ENCODE measurements at regions of chr17 and their contacts with region 1.

Region 1: DNA sequence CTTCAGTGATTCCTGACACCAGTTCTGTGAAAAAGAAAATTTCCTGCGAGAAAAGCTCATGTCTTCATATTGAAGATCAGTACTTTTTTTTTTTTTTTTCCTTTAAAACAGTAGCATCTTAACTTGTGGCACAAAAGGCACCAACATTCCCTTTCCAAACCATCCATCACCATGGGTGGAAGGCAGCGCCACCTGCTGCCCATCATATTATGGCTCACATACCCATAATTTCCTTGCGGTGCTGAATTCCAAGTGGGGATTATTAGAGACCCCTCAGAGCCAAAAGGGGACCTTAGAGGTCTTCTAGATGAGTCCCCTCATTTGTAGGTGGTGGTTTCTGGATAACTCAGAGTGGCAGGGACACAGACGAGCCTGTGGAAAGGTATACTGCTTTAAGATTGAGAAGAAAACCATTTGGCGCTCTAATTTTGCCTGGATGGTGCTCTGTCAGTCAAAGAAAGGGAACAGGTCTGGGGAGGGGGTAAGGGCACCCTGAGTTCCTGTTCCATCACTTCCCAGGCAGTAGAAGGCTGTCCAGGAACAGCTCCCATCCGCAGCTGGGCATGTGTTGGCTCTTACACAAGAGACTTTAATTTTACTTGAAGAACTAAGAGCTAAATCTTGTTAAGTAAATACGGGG is 7.9 kb upstream of the SOST start:
- DNase-seq: peak; percentile 71
- ATAC-seq: no peak
- H3K4me3 Mint-ChIP-seq: no peak overlapping the region
- H3K27ac Mint-ChIP-seq: no peak overlapping the region
- H3K4me1 Mint-ChIP-seq: no peaks in the 10 kb centered on the region
- H3K27me3 Mint-ChIP-seq: no peaks in the 10 kb centered on the region
- CTCF ChIP-seq: peak; percentile 89

Region 2: GRCh38 chr17:43576563-43577229 is 189.8 kb before region 1 on chr17:
- CTCF ChIA-PET with region 1: interaction called, 27 read pairs
- POLR2A ChIA-PET with region 1: no interaction called
- intact Hi-C with region 1: loop called (anchors 10 kb)
- DNase-seq: peak; percentile 73
- ATAC-seq: peak; percentile 77
- H3K4me3 Mint-ChIP-seq: no peak overlapping the region
- H3K27ac Mint-ChIP-seq: no peak overlapping the region
- H3K4me1 Mint-ChIP-seq: peaks cover 12% of the 10 kb centered on the region
- H3K27me3 Mint-ChIP-seq: peaks cover 2% of the 10 kb centered on the region
- CTCF ChIP-seq: peak; percentile 92

Region 3: DNA sequence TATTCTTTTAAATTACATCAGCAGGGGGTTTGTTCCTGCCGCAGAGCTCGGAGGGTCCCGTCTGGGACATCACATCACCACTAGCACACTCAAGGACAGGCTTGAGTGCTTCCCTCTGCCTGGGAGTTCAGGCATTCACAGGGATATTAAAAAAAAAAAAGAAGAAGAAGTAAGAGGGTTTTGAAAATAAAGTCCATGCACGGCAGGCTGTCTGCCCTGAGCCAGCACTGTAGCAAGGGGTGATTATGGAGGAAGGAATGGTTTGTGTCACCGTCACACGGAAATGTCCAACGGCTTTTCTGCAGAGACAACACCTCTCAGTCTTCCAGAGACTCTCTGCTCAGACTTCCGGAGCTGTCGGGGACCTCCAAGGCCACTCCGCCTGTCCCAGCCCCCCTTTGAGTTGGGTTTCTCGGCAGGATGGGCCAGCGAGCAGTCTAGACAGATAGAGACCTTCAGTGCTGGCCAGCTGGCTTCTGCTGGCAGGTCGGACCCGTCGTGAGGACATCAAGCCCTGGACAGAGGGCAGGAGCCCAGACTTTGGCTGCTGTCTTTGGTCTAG is 138.4 kb before region 1 on chr17:
- CTCF ChIA-PET with region 1: no interaction called
- POLR2A ChIA-PET with region 1: no interaction called
- intact Hi-C with region 1: no loop called
- DNase-seq: no peak
- ATAC-seq: no peak
- H3K4me3 Mint-ChIP-seq: no peak overlapping the region
- H3K27ac Mint-ChIP-seq: no peak overlapping the region
- H3K4me1 Mint-ChIP-seq: no peaks in the 10 kb centered on the region
- H3K27me3 Mint-ChIP-seq: peaks cover 4% of the 10 kb centered on the region
- CTCF ChIP-seq: no peak

Region 4: DNA sequence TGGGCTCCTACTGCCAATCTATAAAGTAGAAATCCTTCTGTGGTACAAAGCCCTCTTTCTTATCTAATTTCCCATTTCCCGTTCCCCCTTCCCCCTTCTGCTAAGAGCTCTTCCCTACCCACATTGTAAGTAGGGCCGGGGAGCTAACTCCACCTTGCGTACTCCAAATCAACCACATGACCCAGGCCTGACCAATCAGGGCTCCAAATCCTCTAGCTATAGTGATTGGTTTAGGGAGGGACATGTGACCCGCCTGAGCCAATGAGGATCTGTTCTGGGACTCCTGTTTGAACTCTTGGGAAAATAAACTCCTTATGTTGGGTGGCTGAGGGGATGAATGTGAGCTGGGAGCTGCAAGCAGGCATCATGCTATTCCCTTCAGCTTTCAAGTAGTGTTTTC is 63.9 kb before region 1 on chr17:
- CTCF ChIA-PET with region 1: interaction called, 661 read pairs
- POLR2A ChIA-PET with region 1: no interaction called
- intact Hi-C with region 1: no loop called
- DNase-seq: peak; percentile 47
- ATAC-seq: peak; percentile 50
- H3K4me3 Mint-ChIP-seq: no peak overlapping the region
- H3K27ac Mint-ChIP-seq: no peak overlapping the region
- H3K4me1 Mint-ChIP-seq: peaks cover 18% of the 10 kb centered on the region
- H3K27me3 Mint-ChIP-seq: peaks cover 11% of the 10 kb centered on the region
- CTCF ChIP-seq: no peak

Region 5: DNA sequence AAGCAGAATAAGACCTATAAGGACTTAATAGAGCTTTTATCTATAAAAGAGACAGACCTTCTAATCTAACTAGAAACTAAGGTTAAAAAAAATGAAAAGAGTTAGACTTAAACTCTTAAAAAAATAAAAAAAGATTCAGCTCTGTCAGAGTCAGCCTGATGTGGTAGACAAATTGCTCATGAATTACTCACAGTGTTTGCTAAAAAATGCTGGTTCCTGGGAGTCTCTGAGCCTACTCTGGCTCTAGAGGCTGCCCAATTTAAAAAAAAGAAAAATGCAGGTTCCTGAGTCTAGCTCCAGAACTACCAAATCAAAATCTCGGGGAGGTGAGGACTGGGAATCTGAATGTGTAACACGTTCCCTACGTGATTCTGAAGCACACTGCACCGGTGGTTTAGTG is 26.0 kb before region 1 on chr17:
- CTCF ChIA-PET with region 1: interaction called, 12 read pairs
- POLR2A ChIA-PET with region 1: no interaction called
- intact Hi-C with region 1: no loop called
- DNase-seq: no peak
- ATAC-seq: no peak
- H3K4me3 Mint-ChIP-seq: no peak overlapping the region
- H3K27ac Mint-ChIP-seq: no peak overlapping the region
- H3K4me1 Mint-ChIP-seq: no peaks in the 10 kb centered on the region
- H3K27me3 Mint-ChIP-seq: peaks cover 17% of the 10 kb centered on the region
- CTCF ChIP-seq: no peak

Region 6: DNA sequence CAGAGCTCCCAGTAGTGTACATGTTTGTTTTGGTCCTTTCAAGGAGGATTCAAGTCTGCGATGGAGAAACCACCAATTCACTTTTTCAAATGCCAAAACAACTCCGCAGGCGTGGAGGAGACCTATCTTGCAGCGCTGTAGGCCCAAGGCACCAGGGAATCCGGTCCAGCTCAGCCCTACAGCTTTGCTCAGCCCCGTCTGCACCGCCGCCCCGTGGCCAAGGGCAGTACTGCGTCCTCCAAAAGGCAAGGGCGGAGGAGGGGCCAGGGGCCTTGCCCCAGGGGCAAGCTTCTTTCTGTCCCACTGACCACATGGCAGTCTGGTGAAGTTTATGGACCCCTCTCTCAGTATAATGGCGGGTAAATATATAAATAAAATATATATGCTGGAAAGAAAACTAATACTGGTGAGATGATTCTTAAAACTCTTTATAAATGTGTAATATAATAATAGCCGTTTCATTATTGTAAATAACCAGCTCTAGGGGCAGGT is 79.7 kb after region 1 on chr17:
- CTCF ChIA-PET with region 1: interaction called, 22 read pairs
- POLR2A ChIA-PET with region 1: no interaction called
- intact Hi-C with region 1: no loop called
- DNase-seq: peak; percentile 85
- ATAC-seq: peak; percentile 100
- H3K4me3 Mint-ChIP-seq: no peak overlapping the region
- H3K27ac Mint-ChIP-seq: no peak overlapping the region
- H3K4me1 Mint-ChIP-seq: no peaks in the 10 kb centered on the region
- H3K27me3 Mint-ChIP-seq: peaks cover 12% of the 10 kb centered on the region
- CTCF ChIP-seq: peak; percentile 95

Region 7: GRCh38 chr17:43952717-43953666 is 186.5 kb after region 1 on chr17:
- CTCF ChIA-PET with region 1: no interaction called
- POLR2A ChIA-PET with region 1: no interaction called
- intact Hi-C with region 1: no loop called
- DNase-seq: no peak
- ATAC-seq: no peak
- H3K4me3 Mint-ChIP-seq: no peak overlapping the region
- H3K27ac Mint-ChIP-seq: no peak overlapping the region
- H3K4me1 Mint-ChIP-seq: peaks cover 2% of the 10 kb centered on the region
- H3K27me3 Mint-ChIP-seq: peaks cover 43% of the 10 kb centered on the region
- CTCF ChIP-seq: no peak